ENCODE measurements at regions of chr5 and their contacts with region 1.

Region 1: GRCh38 chr5:33854733-33855151 is 37.0 kb downstream of the ADAMTS12 start:
- DNase-seq: no peak
- H3K4me3 ChIP-seq: peak overlapping the region in 1 of 2 donors; percentile 19
- H3K27ac ChIP-seq: peak overlapping the region; percentile 46 to 59
- H3K4me1 ChIP-seq: peaks cover 6 to 19% of the 10 kb centered on the region in 2 donors
- H3K27me3 ChIP-seq: no peaks in the 10 kb centered on the region
- CTCF ChIP-seq: no peak

Region 2: DNA sequence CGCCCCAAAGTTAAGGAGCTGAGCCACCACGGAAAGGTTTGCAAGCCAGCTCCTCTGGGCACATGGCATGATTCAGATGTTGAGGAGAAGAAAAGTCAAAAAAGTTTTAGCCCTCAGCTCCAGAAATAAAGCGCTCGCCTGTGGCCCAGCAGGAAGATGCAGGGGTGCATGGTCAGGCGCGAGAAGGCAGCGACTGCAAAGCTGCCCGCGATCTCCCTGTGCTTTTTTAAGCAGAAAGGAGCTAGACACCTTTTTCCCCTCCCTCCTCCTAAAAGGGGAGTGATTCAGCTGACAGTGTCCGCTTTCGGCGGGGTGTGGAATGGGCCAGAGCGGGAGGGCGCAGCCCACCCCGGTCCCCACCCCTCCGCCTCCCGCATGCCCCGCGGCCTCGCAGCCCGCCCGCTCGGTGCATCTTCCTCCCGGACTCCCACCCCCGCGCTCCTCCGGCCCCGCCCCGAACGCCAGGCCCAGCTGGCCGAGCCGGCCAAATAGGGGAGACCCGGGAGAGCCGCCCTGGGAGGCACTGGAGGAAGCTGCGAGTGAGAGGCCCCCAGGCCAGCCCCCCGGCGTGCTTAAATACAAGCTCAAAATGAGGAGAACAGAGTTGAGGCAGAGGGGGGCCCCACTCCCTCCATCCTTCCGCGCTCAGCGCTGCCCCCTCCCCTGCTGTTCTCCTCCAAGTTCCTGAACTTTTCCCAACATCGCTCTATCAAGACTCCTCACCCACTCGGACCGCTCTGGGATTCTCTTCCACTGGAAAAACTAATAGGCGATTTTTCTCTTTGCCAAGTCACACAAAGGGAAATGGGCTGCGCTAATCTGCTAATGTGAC is 37.3 kb after region 1 on chr5 and contains the start of gene ADAMTS12:
- intact Hi-C with region 1: loop called (anchors 5 kb)
- DNase-seq: no peak
- H3K4me3 ChIP-seq: peak within 1 kb of the TSS; percentile 57 to 75
- H3K27ac ChIP-seq: peak within 1 kb of the TSS; percentile 27 to 67
- H3K4me1 ChIP-seq: peaks cover 0 to 21% of the 10 kb centered on the region in 2 donors
- H3K27me3 ChIP-seq: no peaks in the 10 kb centered on the region
- CTCF ChIP-seq: no peak
- total RNA-seq, gene ADAMTS12: 1.4 TPM

Region 3: GRCh38 chr5:33969572-33970452 is 115.1 kb after region 1 on chr5:
- intact Hi-C with region 1: no loop called
- DNase-seq: no peak
- H3K4me3 ChIP-seq: no peak overlapping the region
- H3K27ac ChIP-seq: no peak overlapping the region
- H3K4me1 ChIP-seq: no peaks in the 10 kb centered on the region
- H3K27me3 ChIP-seq: no peaks in the 10 kb centered on the region
- CTCF ChIP-seq: peak; percentile 45 to 60 (median 55)

Measured in ascending aorta (tissue), 2 donors.